HepG2 (cell line): ENCODE measurements at regions of chr19 and their contacts with region 1.

Region 1: DNA sequence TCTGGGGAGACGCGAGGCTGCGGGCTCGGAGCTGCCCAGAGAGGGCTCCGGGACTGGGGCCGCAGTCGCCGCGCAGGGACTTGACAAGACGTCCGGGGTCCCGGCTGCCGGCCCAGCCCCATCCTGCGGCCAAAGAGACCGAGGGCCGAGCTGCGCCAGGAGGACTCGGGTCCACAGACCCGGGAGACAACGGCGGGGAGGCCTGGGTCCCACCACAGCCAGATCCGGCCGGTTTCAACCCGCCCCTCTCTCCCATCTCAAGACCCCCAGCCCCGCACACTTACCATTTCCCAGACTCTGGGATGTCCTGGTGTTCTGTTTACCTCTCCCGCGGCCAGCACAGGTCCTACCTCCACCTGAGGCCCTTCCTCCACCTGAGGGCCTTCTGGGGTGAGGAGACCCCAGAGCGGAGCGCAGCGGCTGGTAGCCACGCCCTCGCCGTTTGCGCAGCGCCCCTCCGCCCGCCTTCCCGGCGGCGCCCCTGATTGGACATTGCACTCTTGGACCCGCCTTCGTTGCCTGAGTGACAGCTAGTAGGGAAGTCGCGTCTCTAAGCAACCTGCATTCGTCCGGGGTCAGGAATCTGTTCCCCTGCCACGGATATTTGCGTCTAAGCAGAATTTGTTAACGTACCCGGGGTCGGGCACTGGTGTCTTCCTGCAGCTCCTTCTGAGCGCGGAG is at the start of gene ZNF709:
- DNase-seq: peak; percentile 86
- ATAC-seq: peak; percentile 94
- H3K4me3 ChIP-seq: peak within 1 kb of the TSS; percentile 88 to 100 (median 93)
- H3K27ac ChIP-seq: peak within 1 kb of the TSS; percentile 57
- H3K4me1 ChIP-seq: peaks cover 37% of the 10 kb centered on the region
- H3K27me3 ChIP-seq: no peaks in the 10 kb centered on the region
- CTCF ChIP-seq: no peak
- EP300 ChIP-seq: no peak
- POLR2A ChIP-seq: peak; percentile 88 to 98
- RAD21 ChIP-seq: no peak; the same call in 1 of the 2 replicates
- total RNA-seq, gene ZNF709: 3.9 and 4.7 TPM in 2 replicates

Region 2: DNA sequence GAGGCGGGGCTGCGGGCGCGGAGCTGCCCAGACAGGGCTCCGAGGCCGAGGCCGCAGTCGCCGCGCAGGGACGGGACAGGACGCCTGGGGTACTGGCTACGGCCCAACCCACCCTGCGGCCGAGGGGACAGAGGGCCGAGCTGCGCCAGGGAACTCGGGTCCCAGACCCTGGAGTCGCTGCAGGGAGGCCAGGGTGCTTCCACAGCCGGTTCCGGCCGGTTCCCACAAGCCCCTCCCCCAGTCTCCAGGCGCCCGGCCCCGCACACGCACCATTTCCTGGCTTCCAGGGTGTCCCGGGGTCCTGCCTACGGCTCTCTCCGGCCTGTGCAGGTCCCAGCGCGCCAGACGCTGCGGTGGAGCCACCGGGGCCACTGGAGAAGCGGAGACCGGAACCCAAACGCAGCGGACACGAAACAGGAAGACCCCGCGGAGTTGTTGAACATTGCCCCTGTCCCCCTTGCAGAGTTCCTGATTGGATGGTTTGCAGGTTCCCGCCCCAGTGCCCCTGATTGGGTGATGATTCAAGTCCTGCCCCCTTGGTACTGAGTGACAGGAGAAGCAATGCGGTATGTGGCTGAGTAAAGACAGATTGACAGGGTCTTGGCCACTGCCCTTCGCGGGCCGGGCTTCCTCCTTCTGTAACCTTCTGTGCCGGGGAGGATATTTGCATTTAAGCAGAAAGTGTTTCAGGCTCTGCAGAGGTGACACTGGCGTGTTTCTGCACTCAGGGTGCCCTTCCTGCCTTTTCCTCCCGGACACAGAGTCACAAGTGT is 66.7 kb after region 1 on chr19 and contains the start of gene ZNF564:
- CTCF ChIA-PET with region 1: no interaction called
- POLR2A ChIA-PET with region 1: no interaction called
- in situ Hi-C with region 1: no loop called
- intact Hi-C with region 1: loop called (anchors 5 kb)
- DNase-seq: peak; percentile 100
- ATAC-seq: peak; percentile 96
- H3K4me3 ChIP-seq: peak within 1 kb of the TSS; percentile 86 to 92 (median 91)
- H3K27ac ChIP-seq: peak within 1 kb of the TSS; percentile 93
- H3K4me1 ChIP-seq: peaks cover 44% of the 10 kb centered on the region
- H3K27me3 ChIP-seq: no peaks in the 10 kb centered on the region; a peak in 1 of 5 replicates
- CTCF ChIP-seq: peak; percentile 6; the same call in 1 of the 2 replicates
- EP300 ChIP-seq: peak in 1 of 2 experiments; percentile 22; a peak in 2 of 4 replicates
- POLR2A ChIP-seq: peak; percentile 80 to 95
- RAD21 ChIP-seq: 0 out of 2 replicates have a peak, but pooled peaks have one; percentile 26
- total RNA-seq, gene ZNF564: 11.1 and 11.2 TPM in 2 replicates